CD4-positive, alpha-beta memory T cell (primary cell): ENCODE measurements at regions of chr14 and their contacts with region 1.

Region 1: DNA sequence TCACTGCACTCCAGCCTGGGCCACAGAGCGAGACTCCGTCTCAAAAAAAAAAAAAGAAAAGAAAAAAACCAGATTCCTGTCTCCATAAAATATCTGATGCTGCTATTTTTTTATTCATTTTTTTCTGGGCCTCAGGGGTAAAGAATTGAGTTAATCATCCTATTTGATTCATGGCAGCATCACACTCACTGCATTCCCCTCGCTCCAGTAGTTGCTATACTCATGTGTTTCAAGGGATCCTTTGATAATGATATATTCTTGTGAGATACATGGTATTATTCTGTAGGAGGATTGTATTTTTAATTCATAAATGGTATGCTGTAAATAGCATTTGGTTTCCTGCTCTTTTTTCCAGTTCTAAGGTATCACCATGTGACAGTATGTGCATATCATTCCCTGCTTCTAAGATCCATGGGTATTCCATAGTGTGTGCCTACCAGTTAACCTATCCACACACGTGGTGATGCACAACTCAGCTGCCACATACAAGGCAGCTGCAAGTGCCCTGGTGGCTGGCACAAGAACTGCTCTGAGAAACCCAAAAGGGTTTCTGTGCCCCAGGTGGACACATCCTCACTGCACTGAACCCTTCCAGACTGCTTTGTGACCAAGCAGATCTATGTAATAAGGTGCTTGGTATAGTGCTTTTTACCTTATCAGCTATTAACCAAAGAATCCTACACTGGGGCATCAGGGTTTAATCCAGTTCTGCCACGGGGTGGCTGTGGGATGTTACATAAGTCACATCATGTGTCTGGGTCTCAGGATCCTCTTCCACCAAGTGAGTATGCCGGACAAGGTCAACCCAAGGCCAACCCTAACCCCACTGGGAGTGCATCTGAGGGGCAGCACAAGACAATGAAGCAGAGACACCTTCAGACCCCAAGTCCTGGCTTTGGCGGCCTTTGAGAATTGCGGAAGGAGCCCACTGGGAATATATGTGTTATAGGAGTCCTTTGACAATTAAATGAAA is 74.6 kb downstream of the ZFP36L1 start:
- DNase-seq: no peak
- H3K4me3 ChIP-seq: no peak overlapping the region
- H3K4me3 Mint-ChIP-seq: no peak overlapping the region
- H3K27ac ChIP-seq: no peak overlapping the region
- H3K27ac Mint-ChIP-seq: peak overlapping the region in 2 of 7 donors; percentile 11 to 35
- H3K4me1 ChIP-seq: peaks cover 40% of the 10 kb centered on the region
- H3K4me1 Mint-ChIP-seq: peaks cover 29 to 66% (median 40%) of the 10 kb centered on the region in 4 donors
- H3K27me3 ChIP-seq: no peaks in the 10 kb centered on the region
- H3K27me3 Mint-ChIP-seq: no peaks in the 10 kb centered on the region

Region 2: GRCh38 chr14:68734231-68734775 is 16.0 kb after region 1 on chr14:
- CTCF ChIA-PET with region 1: interaction called, 3 read pairs
- POLR2A ChIA-PET with region 1: interaction called, 15 read pairs
- intact Hi-C with region 1: no loop called
- DNase-seq: peak; percentile 21 to 61 (median 30)
- H3K4me3 ChIP-seq: no peak overlapping the region
- H3K4me3 Mint-ChIP-seq: peak overlapping the region in 7 of 8 donors; percentile 15 to 52 (median 41)
- H3K27ac ChIP-seq: peak overlapping the region; percentile 32
- H3K27ac Mint-ChIP-seq: peak overlapping the region; percentile 9 to 93 (median 75)
- H3K4me1 ChIP-seq: peaks cover 29% of the 10 kb centered on the region
- H3K4me1 Mint-ChIP-seq: peaks cover 24 to 43% (median 34%) of the 10 kb centered on the region in 4 donors
- H3K27me3 ChIP-seq: no peaks in the 10 kb centered on the region
- H3K27me3 Mint-ChIP-seq: no peaks in the 10 kb centered on the region

Region 3: GRCh38 chr14:68775143-68776126 is 57.1 kb after region 1 on chr14:
- CTCF ChIA-PET with region 1: interaction called, 6 read pairs
- POLR2A ChIA-PET with region 1: interaction called, 90 read pairs
- intact Hi-C with region 1: no loop called
- DNase-seq: no peak
- H3K4me3 ChIP-seq: no peak overlapping the region
- H3K4me3 Mint-ChIP-seq: peak overlapping the region in 2 of 8 donors; percentile 11 to 20
- H3K27ac ChIP-seq: no peak overlapping the region
- H3K27ac Mint-ChIP-seq: peak overlapping the region in 5 of 7 donors; percentile 29 to 84 (median 57)
- H3K4me1 ChIP-seq: peaks cover 90% of the 10 kb centered on the region
- H3K4me1 Mint-ChIP-seq: peaks cover 62 to 98% (median 77%) of the 10 kb centered on the region in 4 donors
- H3K27me3 ChIP-seq: no peaks in the 10 kb centered on the region
- H3K27me3 Mint-ChIP-seq: no peaks in the 10 kb centered on the region

Region 4: GRCh38 chr14:68896132-68896531 is 177.8 kb after region 1 on chr14:
- CTCF ChIA-PET with region 1: no interaction called
- POLR2A ChIA-PET with region 1: no interaction called
- intact Hi-C with region 1: no loop called
- DNase-seq: no peak
- H3K4me3 ChIP-seq: no peak overlapping the region
- H3K4me3 Mint-ChIP-seq: no peak overlapping the region
- H3K27ac ChIP-seq: no peak overlapping the region
- H3K27ac Mint-ChIP-seq: peak overlapping the region in 1 of 7 donors; percentile 53
- H3K4me1 ChIP-seq: no peaks in the 10 kb centered on the region
- H3K4me1 Mint-ChIP-seq: peaks cover 0 to 8% (median 4%) of the 10 kb centered on the region in 4 donors
- H3K27me3 ChIP-seq: no peaks in the 10 kb centered on the region
- H3K27me3 Mint-ChIP-seq: no peaks in the 10 kb centered on the region